Heart right ventricle (tissue), 16 donors: ENCODE measurements at regions of chr11 and their contacts with region 1.

Region 1: GRCh38 chr11:120172054-120172911 is 34.4 kb upstream of the TRIM29 start:
- DNase-seq: peak; percentile 64 to 69
- ATAC-seq: peak; percentile 32 to 77 (median 70)
- H3K4me3 ChIP-seq: no peak overlapping the region
- H3K27ac ChIP-seq: no peak overlapping the region
- H3K4me1 ChIP-seq: peaks cover 3 to 32% (median 17%) of the 10 kb centered on the region in 9 donors
- H3K27me3 ChIP-seq: peaks cover 0 to 78% (median 43%) of the 10 kb centered on the region in 7 donors
- CTCF ChIP-seq: peak; percentile 67 to 93 (median 86)

Region 2: DNA sequence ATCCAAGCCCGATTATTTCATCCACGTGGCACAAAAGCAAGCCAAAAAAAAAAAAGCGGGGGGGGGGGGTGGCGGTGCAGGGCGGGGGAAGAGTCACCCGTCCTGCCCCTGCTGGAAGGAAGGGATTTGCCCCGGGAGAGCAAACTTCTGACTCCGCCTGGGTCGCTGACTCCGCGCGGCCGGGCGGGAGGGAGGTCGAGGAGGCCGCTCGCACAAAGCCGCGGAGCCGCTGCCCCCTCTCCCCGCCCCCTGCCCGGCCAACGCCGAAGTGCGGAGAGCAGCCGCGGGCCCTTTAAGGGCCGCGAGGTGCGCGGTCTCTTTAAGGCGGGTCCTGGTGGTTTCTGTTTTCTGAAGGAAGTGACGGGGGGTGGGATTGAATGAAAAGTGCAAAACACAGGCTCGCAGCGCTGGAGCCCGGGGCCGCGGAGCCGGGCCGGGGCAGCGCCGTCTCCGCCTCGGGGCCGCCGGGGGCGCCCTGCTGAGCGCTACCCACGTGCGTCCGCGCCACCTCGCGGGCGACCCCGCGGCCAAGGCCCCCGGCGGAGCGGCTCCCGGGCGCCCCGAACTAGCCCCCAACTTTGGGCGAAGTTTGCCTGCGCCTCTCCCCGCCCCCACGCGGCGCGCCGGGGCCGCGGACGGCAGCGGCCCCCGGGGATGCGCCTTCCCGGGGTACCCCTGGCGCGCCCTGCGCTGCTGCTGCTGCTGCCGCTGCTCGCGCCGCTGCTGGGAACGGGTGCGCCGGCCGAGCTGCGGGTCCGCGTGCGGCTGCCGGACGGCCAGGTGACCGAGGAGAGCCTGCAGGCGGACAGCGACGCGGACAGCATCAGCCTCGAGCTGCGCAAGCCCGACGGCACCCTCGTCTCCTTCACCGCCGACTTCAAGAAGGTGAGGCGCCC is 38.6 kb after region 1 on chr11 and contains the start of gene OAF:
- intact Hi-C with region 1: loop called in 1 of 10 experiments (anchors 5 kb)
- DNase-seq: peak; percentile 77 to 82
- ATAC-seq: peak; percentile 81 to 90 (median 84)
- H3K4me3 ChIP-seq: peak within 1 kb of the TSS; percentile 55 to 89 (median 76)
- H3K27ac ChIP-seq: peak within 1 kb of the TSS; percentile 61 to 92 (median 84)
- H3K4me1 ChIP-seq: peaks cover 4 to 71% (median 49%) of the 10 kb centered on the region in 9 donors
- H3K27me3 ChIP-seq: peaks cover 0 to 7% (median 0%) of the 10 kb centered on the region in 7 donors
- CTCF ChIP-seq: peak in 6 of 9 donors; percentile 11 to 48 (median 40)
- total RNA-seq, gene OAF: 8.4 to 41.6 (median 13.8) TPM

Region 3: GRCh38 chr11:120229451-120230424 is 57.5 kb after region 1 on chr11:
- intact Hi-C with region 1: loop called (anchors 1 to 5 kb)
- DNase-seq: no peak
- ATAC-seq: peak in 1 of 8 donors; percentile 45
- H3K4me3 ChIP-seq: no peak overlapping the region
- H3K27ac ChIP-seq: no peak overlapping the region
- H3K4me1 ChIP-seq: peaks cover 0 to 20% (median 15%) of the 10 kb centered on the region in 9 donors
- H3K27me3 ChIP-seq: peaks cover 0 to 21% (median 14%) of the 10 kb centered on the region in 7 donors
- CTCF ChIP-seq: peak; percentile 64 to 88 (median 78)

Region 4: DNA sequence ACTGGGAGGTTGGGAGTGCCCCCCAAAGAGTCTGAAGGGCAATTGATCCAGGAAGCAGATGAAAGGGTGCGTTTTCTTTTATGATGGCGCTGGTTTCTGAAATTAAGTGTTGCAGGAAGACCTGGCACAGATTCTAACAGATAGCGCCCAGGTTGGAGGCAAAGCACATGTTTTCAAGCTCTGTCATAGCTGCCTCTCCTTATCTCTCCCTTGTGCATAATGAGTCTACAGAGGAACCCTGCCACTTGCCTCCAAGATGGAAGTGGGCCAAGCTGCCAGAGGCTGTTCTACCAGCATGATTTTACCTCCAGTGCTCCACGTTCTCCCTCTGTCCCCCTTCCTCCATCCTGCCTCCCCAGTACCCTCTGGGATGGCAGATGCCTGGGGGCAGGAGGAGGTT is 122.8 kb after region 1 on chr11:
- intact Hi-C with region 1: loop called in 8 of 10 experiments (anchors 1 to 5 kb)
- DNase-seq: no peak
- ATAC-seq: peak in 4 of 8 donors; percentile 39 to 55 (median 44)
- H3K4me3 ChIP-seq: no peak overlapping the region
- H3K27ac ChIP-seq: no peak overlapping the region
- H3K4me1 ChIP-seq: peaks cover 0 to 12% (median 0%) of the 10 kb centered on the region in 9 donors
- H3K27me3 ChIP-seq: peaks cover 0 to 79% (median 52%) of the 10 kb centered on the region in 7 donors
- CTCF ChIP-seq: no peak

Region 5: GRCh38 chr11:120303004-120303637 is 130.8 kb after region 1 on chr11:
- intact Hi-C with region 1: loop called (anchors 1 to 5 kb)
- DNase-seq: peak; percentile 42 to 65
- ATAC-seq: peak in 7 of 8 donors; percentile 67 to 80 (median 77)
- H3K4me3 ChIP-seq: no peak overlapping the region
- H3K27ac ChIP-seq: no peak overlapping the region
- H3K4me1 ChIP-seq: peaks cover 0 to 12% (median 0%) of the 10 kb centered on the region in 9 donors
- H3K27me3 ChIP-seq: peaks cover 0 to 24% (median 13%) of the 10 kb centered on the region in 7 donors
- CTCF ChIP-seq: peak; percentile 69 to 94 (median 89)

Region 6: GRCh38 chr11:121696177-121696871 is 1524.0 kb after region 1 on chr11:
- intact Hi-C with region 1: no loop called
- DNase-seq: peak; percentile 11 to 38
- ATAC-seq: peak; percentile 60 to 89 (median 84)
- H3K4me3 ChIP-seq: peak overlapping the region in 5 of 10 donors; percentile 2 to 18 (median 9)
- H3K27ac ChIP-seq: peak overlapping the region; percentile 61 to 89 (median 79)
- H3K4me1 ChIP-seq: peaks cover 0 to 30% (median 0%) of the 10 kb centered on the region in 9 donors
- H3K27me3 ChIP-seq: peaks cover 0 to 9% (median 0%) of the 10 kb centered on the region in 7 donors
- CTCF ChIP-seq: no peak